ENCODE measurements at regions of chr7 and their contacts with region 1.

Region 1: DNA sequence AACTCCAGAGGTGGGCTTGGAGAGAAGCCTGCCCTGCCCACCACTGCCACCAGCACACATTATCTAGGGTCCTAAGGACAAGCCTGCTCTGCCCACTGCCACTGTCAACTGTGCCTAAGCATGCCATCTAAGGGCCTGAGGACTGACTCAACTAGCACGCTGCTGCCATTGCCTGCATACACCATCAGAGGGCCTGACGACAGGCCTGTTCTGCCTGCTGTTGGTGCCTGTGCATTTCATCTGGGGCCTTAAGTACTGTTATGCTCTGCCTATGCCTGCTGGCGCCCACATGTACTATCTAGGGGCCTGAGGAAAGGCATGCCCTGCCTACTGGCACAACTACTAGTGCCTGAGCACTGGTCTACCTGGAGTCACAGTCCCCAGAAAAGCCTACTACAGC is 27.1 kb upstream of the LRRD1 start:
- DNase-seq: no peak
- ATAC-seq: no peak
- H3K4me3 ChIP-seq: no peak overlapping the region
- H3K27ac ChIP-seq: no peak overlapping the region
- H3K4me1 ChIP-seq: no peaks in the 10 kb centered on the region
- H3K27me3 ChIP-seq: no peaks in the 10 kb centered on the region
- CTCF ChIP-seq: no peak
- POLR2A ChIP-seq: no peak

Region 2: DNA sequence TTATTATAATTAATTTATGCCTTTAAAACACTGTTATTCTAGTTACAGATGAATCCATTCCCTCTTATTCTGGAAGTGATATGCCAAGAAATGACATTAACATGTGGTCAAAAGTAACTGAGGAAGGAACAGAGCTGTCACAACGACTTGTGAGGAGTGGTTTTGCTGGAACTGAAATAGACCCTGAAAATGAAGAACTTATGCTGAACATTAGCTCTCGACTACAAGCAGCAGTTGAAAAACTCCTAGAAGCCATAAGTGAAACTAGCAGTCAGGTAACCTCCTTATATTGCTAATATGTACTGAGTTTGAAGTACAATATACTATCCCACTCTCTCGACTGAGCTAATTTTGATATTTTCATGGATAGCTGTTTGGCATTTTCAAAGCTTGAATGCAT is 153.3 kb before region 1 on chr7:
- in situ Hi-C with region 1: no loop called
- intact Hi-C with region 1: no loop called
- DNase-seq: no peak
- ATAC-seq: no peak
- H3K4me3 ChIP-seq: no peak overlapping the region
- H3K27ac ChIP-seq: peak overlapping the region in 3 of 4 donors; percentile 0 to 78 (median 5)
- H3K4me1 ChIP-seq: peaks cover 5 to 29% of the 10 kb centered on the region in 2 donors
- H3K27me3 ChIP-seq: no peaks in the 10 kb centered on the region
- CTCF ChIP-seq: no peak
- POLR2A ChIP-seq: no peak

Region 3: GRCh38 chr7:92095380-92095779 is 110.6 kb before region 1 on chr7:
- in situ Hi-C with region 1: no loop called
- intact Hi-C with region 1: loop called (anchors 10 kb)
- DNase-seq: no peak
- ATAC-seq: no peak
- H3K4me3 ChIP-seq: no peak overlapping the region
- H3K27ac ChIP-seq: no peak overlapping the region
- H3K4me1 ChIP-seq: no peaks in the 10 kb centered on the region
- H3K27me3 ChIP-seq: no peaks in the 10 kb centered on the region
- CTCF ChIP-seq: no peak
- POLR2A ChIP-seq: no peak

Measured in gastrocnemius medialis (tissue), 4 donors.